Naive thymus-derived CD4-positive, alpha-beta T cell (primary cell): ENCODE measurements at regions of chr16 and their contacts with region 1.

Region 1: GRCh38 chr16:57300387-57301125 is 16.1 kb upstream of the PLLP start:
- DNase-seq: peak; percentile 98 to 100 (median 99)
- ATAC-seq: peak; percentile 96
- H3K4me3 ChIP-seq: peak overlapping the region; percentile 65
- H3K4me3 Mint-ChIP-seq: no peak overlapping the region
- H3K27ac ChIP-seq: peak overlapping the region; percentile 75
- H3K27ac Mint-ChIP-seq: no peak overlapping the region
- H3K4me1 ChIP-seq: peaks cover 16 to 28% of the 10 kb centered on the region in 2 donors
- H3K4me1 Mint-ChIP-seq: peaks cover 4 to 24% (median 11%) of the 10 kb centered on the region in 7 donors
- H3K27me3 ChIP-seq: no peaks in the 10 kb centered on the region
- H3K27me3 Mint-ChIP-seq: peaks cover 0 to 4% (median 0%) of the 10 kb centered on the region in 5 donors

Region 2: DNA sequence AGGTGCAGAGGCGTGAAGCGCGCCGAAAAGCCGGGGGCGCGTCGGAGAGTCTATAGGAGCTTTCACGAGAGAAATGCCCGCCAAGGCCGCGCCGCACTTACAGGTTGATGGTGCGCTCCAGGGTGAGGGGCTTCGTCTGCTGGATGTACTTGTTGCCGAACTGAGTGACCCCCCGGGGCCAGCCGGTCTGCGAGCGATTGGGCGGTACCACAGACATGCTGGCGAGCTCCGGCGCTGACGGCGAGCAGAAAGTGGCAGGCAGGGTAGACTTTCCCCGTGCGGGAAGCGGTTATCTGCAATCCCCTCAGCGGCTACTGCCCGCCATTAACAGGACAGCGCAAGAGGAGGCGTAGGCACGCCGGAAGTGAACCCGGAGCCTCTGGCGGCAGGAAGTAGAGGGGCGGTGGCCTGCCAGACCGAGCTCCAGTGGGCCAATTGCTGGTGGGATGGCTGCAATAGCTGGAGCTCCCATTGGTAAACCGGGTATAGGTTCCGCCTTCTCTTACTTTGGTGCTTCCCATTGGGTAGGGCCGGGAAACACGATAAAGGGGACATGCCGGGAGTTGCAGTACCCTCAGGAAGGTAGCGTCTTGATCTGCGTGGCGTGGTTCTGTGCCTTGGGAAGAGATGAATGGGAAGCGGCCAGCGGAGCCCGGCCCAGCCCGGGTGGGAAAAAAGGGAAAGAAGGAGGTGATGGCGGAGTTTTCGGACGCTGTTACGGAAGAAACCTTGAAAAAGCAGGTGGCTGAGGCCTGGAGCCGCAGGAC is 849.4 kb before region 1 on chr16 and contains the starts of genes NUDT21 and OGFOD1:
- CTCF ChIA-PET with region 1: no interaction called
- POLR2A ChIA-PET with region 1: no interaction called
- intact Hi-C with region 1: loop called in 1 of 2 experiments (anchors 1 kb)
- DNase-seq: peak; percentile 67 to 96 (median 93)
- ATAC-seq: peak; percentile 99
- H3K4me3 ChIP-seq: peak within 1 kb of the TSS; percentile 96
- H3K4me3 Mint-ChIP-seq: peak within 1 kb of the TSS; percentile 94 to 100 (median 97)
- H3K27ac ChIP-seq: peak within 1 kb of the TSS; percentile 92
- H3K27ac Mint-ChIP-seq: peak within 1 kb of the TSS; percentile 92 to 98 (median 93)
- H3K4me1 ChIP-seq: peaks cover 24 to 42% of the 10 kb centered on the region in 2 donors
- H3K4me1 Mint-ChIP-seq: peaks cover 50 to 77% (median 64%) of the 10 kb centered on the region in 7 donors
- H3K27me3 ChIP-seq: no peaks in the 10 kb centered on the region
- H3K27me3 Mint-ChIP-seq: no peaks in the 10 kb centered on the region
- total RNA-seq, gene NUDT21: 74.0 to 191 (median 97.5) TPM
- total RNA-seq, gene OGFOD1: 23.8 to 51.8 (median 42.1) TPM

Region 3: GRCh38 chr16:57244767-57245471 is 55.6 kb before region 1 on chr16 and contains the start of gene ARL2BP:
- CTCF ChIA-PET with region 1: interaction called, 6 read pairs
- POLR2A ChIA-PET with region 1: interaction called, 10 read pairs
- intact Hi-C with region 1: loop called (anchors 1 kb)
- DNase-seq: peak; percentile 90 to 98 (median 96)
- ATAC-seq: peak; percentile 97
- H3K4me3 ChIP-seq: peak within 1 kb of the TSS; percentile 44
- H3K4me3 Mint-ChIP-seq: peak within 1 kb of the TSS; percentile 81 to 97 (median 89)
- H3K27ac ChIP-seq: peak within 1 kb of the TSS; percentile 84
- H3K27ac Mint-ChIP-seq: peak within 1 kb of the TSS; percentile 88 to 97 (median 93)
- H3K4me1 ChIP-seq: peaks cover 5 to 6% of the 10 kb centered on the region in 2 donors
- H3K4me1 Mint-ChIP-seq: peaks cover 14 to 25% (median 17%) of the 10 kb centered on the region in 7 donors
- H3K27me3 ChIP-seq: no peaks in the 10 kb centered on the region
- H3K27me3 Mint-ChIP-seq: no peaks in the 10 kb centered on the region
- total RNA-seq, gene ARL2BP: 32.6 to 57.7 (median 37.9) TPM

Region 4: DNA sequence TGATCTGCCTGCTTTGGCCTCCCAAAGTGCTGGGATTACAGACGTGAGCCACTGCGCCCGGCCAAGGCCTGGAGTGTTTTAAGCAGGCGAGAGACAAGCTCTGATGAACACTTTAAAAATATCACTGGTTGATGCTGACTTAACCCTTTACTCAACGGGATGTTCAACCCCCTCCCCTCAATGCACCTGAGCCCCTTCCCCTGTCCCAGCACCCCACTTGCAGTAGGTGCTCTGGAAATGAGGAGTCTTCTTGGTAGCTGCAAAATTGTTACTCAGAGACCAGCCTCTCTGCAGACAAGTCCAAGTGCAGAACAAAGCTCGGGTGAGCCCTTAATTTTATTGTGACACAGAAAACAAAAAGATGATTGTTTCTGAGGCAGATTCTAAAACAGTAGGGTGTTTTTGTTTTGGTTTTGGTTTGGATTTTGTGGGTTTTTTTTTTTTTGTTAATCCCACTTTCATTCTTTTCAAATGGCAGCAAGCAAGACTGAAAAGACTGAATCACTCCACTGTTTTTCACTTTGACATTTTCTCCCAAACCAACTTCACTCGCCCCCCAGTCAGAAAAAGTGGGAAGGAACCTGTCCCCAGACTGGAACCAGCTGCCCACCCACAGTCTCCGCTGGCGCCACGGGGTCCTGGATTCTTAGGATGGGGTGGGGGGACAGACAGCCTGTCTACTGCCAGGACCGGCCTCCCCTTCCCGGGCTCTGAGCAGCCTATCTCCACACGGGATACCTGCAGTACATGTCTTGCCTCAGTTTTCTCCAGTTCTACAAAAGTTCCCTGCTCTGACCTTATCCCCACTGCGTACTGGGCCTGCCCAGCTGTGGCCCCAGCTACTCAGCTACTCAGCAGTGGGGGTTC is 10.9 kb before region 1 on chr16:
- CTCF ChIA-PET with region 1: interaction called, 11 read pairs
- POLR2A ChIA-PET with region 1: interaction called, 4 read pairs
- intact Hi-C with region 1: loop called (anchors 1 kb)
- DNase-seq: peak in 1 of 9 donors; percentile 29
- ATAC-seq: no peak
- H3K4me3 ChIP-seq: no peak overlapping the region
- H3K4me3 Mint-ChIP-seq: peak overlapping the region in 1 of 10 donors; percentile 55
- H3K27ac ChIP-seq: no peak overlapping the region
- H3K27ac Mint-ChIP-seq: peak overlapping the region in 2 of 9 donors; percentile 25 to 80
- H3K4me1 ChIP-seq: no peaks in the 10 kb centered on the region
- H3K4me1 Mint-ChIP-seq: peaks cover 2 to 22% (median 7%) of the 10 kb centered on the region in 7 donors
- H3K27me3 ChIP-seq: peaks cover 0 to 8% of the 10 kb centered on the region in 2 donors
- H3K27me3 Mint-ChIP-seq: peaks cover 0 to 11% (median 0%) of the 10 kb centered on the region in 5 donors

Region 5: DNA sequence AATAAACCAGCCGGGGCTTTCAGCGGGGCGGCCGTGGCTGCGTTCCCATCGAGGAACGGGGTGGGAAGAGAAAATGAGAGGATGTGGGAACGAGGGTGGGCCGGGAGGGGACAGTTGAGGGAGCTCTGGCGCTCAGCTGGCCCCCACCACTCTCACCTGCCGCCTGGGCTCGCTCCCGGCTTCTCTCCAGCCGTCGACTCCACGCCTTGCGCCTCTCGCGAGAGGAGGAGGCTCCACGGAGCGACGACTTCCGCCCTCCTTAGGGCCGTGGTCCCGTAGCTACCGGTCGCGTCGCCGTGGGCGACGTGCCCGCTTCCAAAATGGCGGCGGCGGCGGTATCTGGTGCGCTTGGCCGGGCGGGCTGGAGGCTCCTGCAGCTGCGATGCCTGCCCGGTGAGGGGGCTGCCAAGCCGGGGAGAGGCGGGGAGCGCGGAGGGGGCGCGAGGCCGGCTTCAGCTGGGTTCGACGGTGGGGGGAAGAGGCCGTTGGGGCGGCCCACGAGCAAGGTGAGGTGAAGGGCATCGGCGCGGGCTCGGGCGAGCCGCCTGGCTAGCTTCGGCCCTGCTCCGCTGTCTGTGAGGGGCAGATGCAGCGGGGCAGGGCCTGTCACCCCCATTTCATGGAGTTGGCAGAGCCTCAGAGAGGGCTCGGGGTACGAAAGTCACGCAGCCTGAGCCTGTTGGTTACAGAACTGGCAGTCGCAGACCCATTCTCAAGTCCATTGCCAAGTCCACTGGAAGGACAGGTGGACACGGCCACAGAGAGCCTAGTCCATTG is 146.8 kb after region 1 on chr16 and contains the starts of genes CIAPIN1 and COQ9:
- CTCF ChIA-PET with region 1: interaction called, 6 read pairs
- POLR2A ChIA-PET with region 1: interaction called, 3 read pairs
- intact Hi-C with region 1: loop called (anchors 1 kb)
- DNase-seq: peak; percentile 83 to 94 (median 88)
- ATAC-seq: peak; percentile 99
- H3K4me3 ChIP-seq: peak within 1 kb of the TSS; percentile 84
- H3K4me3 Mint-ChIP-seq: peak within 1 kb of the TSS; percentile 90 to 97 (median 92)
- H3K27ac ChIP-seq: peak within 1 kb of the TSS; percentile 87
- H3K27ac Mint-ChIP-seq: peak within 1 kb of the TSS; percentile 75 to 96 (median 90)
- H3K4me1 ChIP-seq: peaks cover 7 to 17% of the 10 kb centered on the region in 2 donors
- H3K4me1 Mint-ChIP-seq: peaks cover 15 to 64% (median 45%) of the 10 kb centered on the region in 7 donors
- H3K27me3 ChIP-seq: no peaks in the 10 kb centered on the region
- H3K27me3 Mint-ChIP-seq: no peaks in the 10 kb centered on the region
- total RNA-seq, gene CIAPIN1: 33.6 to 52.8 (median 35.8) TPM
- total RNA-seq, gene COQ9: 16.4 to 45.4 (median 36.6) TPM

Region 6: DNA sequence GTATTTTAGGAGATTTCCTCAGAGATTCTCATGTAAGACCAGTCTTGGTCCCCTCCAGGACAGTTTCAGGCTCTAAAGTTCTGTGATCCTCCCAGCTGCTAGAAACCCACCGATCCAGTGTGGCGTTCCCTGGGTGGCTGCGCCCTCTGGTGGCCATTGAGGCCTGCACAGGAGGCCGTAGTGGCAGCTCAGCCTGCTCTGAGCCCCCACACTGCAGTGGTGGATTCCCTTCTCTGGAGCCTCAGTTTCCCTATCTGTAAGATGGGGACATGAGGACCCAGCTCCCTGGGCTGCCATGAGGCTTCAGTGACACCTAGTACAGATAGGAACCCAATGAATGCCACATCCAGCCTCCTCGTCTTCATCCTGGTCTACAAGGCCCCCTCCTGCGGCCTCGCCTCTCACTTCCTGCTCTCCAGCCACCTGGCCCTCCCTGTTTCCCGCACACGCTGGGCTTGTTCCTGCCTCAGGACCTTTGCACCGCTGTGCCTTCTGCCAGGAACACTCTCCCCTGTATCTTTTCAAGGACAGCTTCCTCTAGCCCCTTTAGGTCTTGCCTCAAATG is 219.3 kb after region 1 on chr16:
- CTCF ChIA-PET with region 1: interaction called, 3 read pairs
- POLR2A ChIA-PET with region 1: no interaction called
- intact Hi-C with region 1: loop called in 1 of 2 experiments (anchors 1 kb)
- DNase-seq: peak; percentile 61 to 86 (median 73)
- ATAC-seq: peak; percentile 90
- H3K4me3 ChIP-seq: no peak overlapping the region
- H3K4me3 Mint-ChIP-seq: no peak overlapping the region
- H3K27ac ChIP-seq: no peak overlapping the region
- H3K27ac Mint-ChIP-seq: peak overlapping the region in 3 of 9 donors; percentile 62 to 83 (median 76)
- H3K4me1 ChIP-seq: peaks cover 7 to 8% of the 10 kb centered on the region in 2 donors
- H3K4me1 Mint-ChIP-seq: peaks cover 5 to 19% (median 6%) of the 10 kb centered on the region in 7 donors
- H3K27me3 ChIP-seq: no peaks in the 10 kb centered on the region
- H3K27me3 Mint-ChIP-seq: no peaks in the 10 kb centered on the region

Region 7: DNA sequence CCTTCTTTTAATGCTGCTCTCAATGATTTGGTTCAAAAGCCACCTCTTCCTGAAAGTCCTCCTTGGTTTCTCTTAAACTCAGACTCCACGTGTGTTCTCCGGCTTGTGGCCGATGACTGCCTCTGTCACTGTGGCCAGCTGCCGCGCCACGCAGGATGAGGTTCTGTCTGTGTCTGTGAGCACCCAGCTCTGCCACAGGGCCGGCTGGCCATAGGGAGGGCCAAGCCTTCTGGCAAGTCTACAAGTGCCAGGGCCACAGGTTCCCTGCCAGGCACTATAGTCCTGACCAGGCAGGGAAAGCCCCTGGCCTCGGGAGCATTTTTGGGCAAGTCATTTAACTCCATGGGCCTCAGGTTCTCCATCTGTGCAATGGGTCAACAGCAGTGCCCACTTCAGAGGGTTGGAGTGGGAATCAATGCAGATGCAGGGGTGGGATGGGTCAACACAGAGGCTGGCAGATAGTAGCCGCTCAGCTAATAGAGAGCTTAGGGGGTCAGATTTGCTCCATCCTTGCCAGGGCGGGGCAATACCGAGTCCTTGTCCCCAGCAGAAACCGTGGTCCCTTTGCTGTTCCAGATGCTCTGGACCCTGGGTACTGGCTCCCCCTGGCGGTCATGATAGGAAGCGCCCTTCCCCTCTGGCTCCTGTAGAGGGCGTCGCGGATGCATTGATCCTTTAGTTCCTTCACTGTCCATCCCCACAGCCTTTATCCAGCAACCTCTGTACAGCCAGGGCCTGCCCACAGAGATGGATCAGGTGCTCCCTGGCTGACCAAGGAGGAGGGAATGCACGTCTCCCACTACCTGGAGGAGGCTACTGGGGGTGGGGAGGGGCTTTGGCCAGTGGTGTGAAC is 348.3 kb after region 1 on chr16:
- CTCF ChIA-PET with region 1: interaction called, 3 read pairs
- POLR2A ChIA-PET with region 1: no interaction called
- intact Hi-C with region 1: loop called in 1 of 2 experiments (anchors 1 kb)
- DNase-seq: peak; percentile 63 to 90 (median 80)
- ATAC-seq: peak; percentile 90
- H3K4me3 ChIP-seq: no peak overlapping the region
- H3K4me3 Mint-ChIP-seq: peak overlapping the region in 2 of 10 donors; percentile 7 to 77
- H3K27ac ChIP-seq: no peak overlapping the region
- H3K27ac Mint-ChIP-seq: peak overlapping the region in 5 of 9 donors; percentile 11 to 66 (median 59)
- H3K4me1 ChIP-seq: peaks cover 0 to 29% of the 10 kb centered on the region in 2 donors
- H3K4me1 Mint-ChIP-seq: peaks cover 6 to 33% (median 15%) of the 10 kb centered on the region in 7 donors
- H3K27me3 ChIP-seq: no peaks in the 10 kb centered on the region
- H3K27me3 Mint-ChIP-seq: no peaks in the 10 kb centered on the region